ENCODE measurements at regions of chr3 and their contacts with region 1.

Region 1: DNA sequence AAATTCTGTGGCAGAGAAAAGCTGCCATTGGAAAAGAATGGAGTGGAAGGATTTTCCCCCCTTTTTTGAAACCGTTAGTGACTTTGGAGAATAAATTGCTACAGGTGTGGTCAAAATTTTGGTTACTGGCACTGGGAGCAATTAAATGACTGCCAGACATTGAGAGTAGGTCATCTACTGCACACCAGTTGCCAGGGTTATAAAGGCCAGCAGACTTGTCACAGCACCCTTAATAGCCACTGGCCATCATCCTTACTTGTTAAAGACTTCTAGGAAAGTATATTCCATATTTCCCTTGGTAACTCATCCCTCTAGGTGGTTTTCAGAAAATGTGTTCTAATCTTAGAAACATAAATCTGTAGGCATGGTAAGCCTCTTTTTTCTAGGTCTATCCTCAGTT is 8.0 kb downstream of the PIK3CA start:
- DNase-seq: no peak
- H3K4me3 ChIP-seq: no peak overlapping the region
- H3K27ac ChIP-seq: no peak overlapping the region
- H3K4me1 ChIP-seq: no peaks in the 10 kb centered on the region
- H3K27me3 ChIP-seq: no peaks in the 10 kb centered on the region
- CTCF ChIP-seq: no peak

Region 2: GRCh38 chr3:178255315-178255714 is 900.9 kb before region 1 on chr3:
- CTCF ChIA-PET with region 1: no interaction called
- POLR2A ChIA-PET with region 1: no interaction called
- intact Hi-C with region 1: no loop called
- DNase-seq: no peak
- H3K4me3 ChIP-seq: no peak overlapping the region
- H3K27ac ChIP-seq: no peak overlapping the region
- H3K4me1 ChIP-seq: no peaks in the 10 kb centered on the region
- H3K27me3 ChIP-seq: no peaks in the 10 kb centered on the region
- CTCF ChIP-seq: no peak

Region 3: GRCh38 chr3:179336345-179336929 is 180.3 kb after region 1 on chr3:
- CTCF ChIA-PET with region 1: interaction called, 11 read pairs
- POLR2A ChIA-PET with region 1: no interaction called
- intact Hi-C with region 1: no loop called
- DNase-seq: no peak
- H3K4me3 ChIP-seq: no peak overlapping the region
- H3K27ac ChIP-seq: no peak overlapping the region
- H3K4me1 ChIP-seq: no peaks in the 10 kb centered on the region
- H3K27me3 ChIP-seq: no peaks in the 10 kb centered on the region
- CTCF ChIP-seq: no peak

Measured in PC-9 (cell line).